Activated naive CD8-positive, alpha-beta T cell treated with anti-CD3 and anti-CD28 coated beads, Interleukin-2, amount 10 ng/mL, durations not matched to agents 7 days and 5 days (primary cell): ENCODE measurements at regions of chr10 and their contacts with region 1.

Region 1: DNA sequence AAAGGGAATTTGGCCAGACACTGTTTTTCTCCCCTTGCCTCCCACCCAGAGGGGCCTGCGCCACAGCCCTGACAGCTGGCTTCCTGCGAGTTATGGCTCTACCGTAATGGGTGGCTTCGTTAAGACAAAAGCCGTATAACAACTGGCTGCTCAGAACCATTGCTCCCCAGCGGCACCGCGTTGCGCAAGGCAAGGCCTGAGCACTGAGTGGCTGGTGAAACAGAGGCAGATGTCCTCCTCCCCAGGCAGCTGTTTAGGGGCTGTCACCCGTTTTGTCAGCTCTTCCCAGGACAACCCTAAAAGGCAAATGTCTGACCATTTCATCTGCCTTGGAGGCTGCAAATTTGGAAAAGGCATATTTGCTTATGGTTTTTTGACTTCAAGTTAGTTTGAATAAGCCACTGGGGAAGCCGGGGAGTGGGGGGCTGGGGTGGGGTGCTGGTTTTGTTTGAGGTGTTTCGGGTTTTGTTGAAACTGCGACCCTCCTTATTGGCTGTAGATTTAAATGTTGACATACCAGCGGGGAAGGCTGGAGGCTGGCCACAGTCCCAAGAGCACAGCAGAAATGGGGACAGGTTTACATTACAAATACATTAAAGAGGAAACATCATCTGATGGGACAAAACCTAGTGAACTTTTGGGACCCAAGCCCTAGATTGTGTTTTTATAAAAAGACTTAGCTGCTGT is 681 bp upstream of the SPOCK2 start:
- DNase-seq: peak; percentile 71
- ATAC-seq: peak; percentile 52
- H3K4me3 Mint-ChIP-seq: peak overlapping the region; percentile 98
- H3K27ac Mint-ChIP-seq: peak overlapping the region; percentile 99
- H3K4me1 Mint-ChIP-seq: peaks cover 46% of the 10 kb centered on the region
- H3K27me3 Mint-ChIP-seq: no peaks in the 10 kb centered on the region

Region 2: GRCh38 chr10:72009411-72010081 is 79.5 kb before region 1 on chr10:
- POLR2A ChIA-PET with region 1: no interaction called
- DNase-seq: no peak
- ATAC-seq: no peak
- H3K4me3 Mint-ChIP-seq: no peak overlapping the region
- H3K27ac Mint-ChIP-seq: no peak overlapping the region
- H3K4me1 Mint-ChIP-seq: no peaks in the 10 kb centered on the region
- H3K27me3 Mint-ChIP-seq: no peaks in the 10 kb centered on the region

Region 3: GRCh38 chr10:72107325-72108003 is 18.4 kb after region 1 on chr10:
- POLR2A ChIA-PET with region 1: interaction called, 67 read pairs
- DNase-seq: no peak
- ATAC-seq: peak; percentile 67
- H3K4me3 Mint-ChIP-seq: peak overlapping the region; percentile 70
- H3K27ac Mint-ChIP-seq: peak overlapping the region; percentile 79
- H3K4me1 Mint-ChIP-seq: peaks cover 62% of the 10 kb centered on the region
- H3K27me3 Mint-ChIP-seq: no peaks in the 10 kb centered on the region

Region 4: DNA sequence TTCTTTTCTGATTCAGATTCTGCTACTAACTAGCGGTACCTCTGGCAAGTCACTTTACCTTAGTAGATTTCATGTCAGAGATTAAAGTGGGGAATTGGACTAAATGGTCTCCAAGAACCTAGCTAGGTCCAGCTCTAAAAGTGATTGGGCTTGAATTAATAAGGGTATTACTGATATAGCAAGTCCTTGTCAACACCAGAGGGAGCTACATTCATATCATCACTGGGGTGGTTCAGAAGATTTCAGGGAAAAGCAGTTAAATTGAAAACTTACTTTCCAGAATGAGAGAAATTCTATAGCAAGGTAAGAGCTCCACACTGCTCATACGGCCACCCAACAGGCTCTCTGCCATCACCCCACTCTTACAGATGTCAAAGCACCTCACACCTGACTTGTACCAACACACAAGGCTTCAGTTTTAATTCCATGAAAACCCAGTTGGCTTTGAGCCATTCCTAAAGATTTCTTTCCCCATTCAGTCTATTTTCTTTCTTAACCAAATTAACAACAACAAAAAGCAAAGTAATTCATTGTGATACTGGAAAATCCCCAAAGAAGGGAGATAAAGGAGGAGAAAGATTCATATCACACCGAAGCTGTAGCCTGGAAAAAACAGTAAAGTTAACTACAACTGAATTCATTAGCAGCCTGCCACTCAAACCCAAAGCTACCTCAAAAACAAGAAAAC is 37.3 kb after region 1 on chr10:
- POLR2A ChIA-PET with region 1: interaction called, 18 read pairs
- DNase-seq: no peak
- ATAC-seq: peak; percentile 26
- H3K4me3 Mint-ChIP-seq: no peak overlapping the region
- H3K27ac Mint-ChIP-seq: no peak overlapping the region
- H3K4me1 Mint-ChIP-seq: peaks cover 27% of the 10 kb centered on the region
- H3K27me3 Mint-ChIP-seq: no peaks in the 10 kb centered on the region

Region 5: DNA sequence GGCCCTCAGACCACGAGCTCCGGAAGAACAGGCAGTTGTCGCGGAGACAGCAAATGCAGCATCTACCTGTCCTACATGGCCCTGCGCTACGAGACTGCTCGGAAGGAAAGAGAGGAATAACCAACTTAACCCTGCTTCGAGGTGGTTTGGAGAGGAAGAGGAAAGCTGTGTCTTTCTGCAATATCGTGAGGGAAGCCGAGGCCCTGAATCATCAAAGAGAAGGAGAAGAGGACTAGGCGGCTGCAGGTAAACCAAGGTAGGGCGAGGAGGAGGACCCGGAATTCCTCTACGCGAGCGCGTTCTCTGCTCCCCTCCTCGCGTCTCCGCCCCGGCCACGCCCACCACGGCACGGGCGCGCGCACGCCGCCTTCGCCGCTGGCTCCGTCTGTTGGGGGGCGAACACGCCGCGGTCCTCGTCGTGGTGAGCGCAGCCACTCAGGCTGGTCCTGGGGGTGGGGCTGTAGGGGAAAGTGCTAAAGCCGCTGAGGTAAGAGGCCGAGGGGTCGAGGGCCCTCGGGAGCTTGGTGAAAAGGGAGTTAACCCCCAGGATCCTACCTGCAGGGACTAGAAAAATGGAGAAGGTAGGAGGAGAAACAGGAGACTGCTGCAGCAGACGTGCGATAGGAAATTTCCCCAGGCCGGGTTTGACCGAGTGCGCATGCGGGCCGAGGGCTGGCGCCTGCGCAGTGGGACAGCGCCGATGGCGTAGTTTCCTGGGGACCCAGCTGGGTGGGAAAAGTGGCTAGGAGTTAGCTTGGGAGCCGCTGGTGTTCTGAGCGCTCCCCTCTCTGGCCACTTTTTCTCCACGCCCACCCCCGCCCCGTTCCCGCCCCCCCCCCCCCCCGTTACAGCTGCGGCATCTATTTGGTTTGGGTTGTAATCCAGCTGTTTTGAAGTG is 126.9 kb after region 1 on chr10 and contains the starts of genes ANAPC16 and ASCC1:
- POLR2A ChIA-PET with region 1: interaction called, 31 read pairs
- DNase-seq: peak; percentile 99
- ATAC-seq: peak; percentile 87
- H3K4me3 Mint-ChIP-seq: peak within 1 kb of the TSS; percentile 93
- H3K27ac Mint-ChIP-seq: peak within 1 kb of the TSS; percentile 93
- H3K4me1 Mint-ChIP-seq: peaks cover 40% of the 10 kb centered on the region
- H3K27me3 Mint-ChIP-seq: no peaks in the 10 kb centered on the region
- total RNA-seq, gene ANAPC16: 89.2 to 89.8 TPM
- total RNA-seq, gene ASCC1: 28.5 to 34.4 TPM

Region 6: GRCh38 chr10:72223743-72224101 is 134.7 kb after region 1 on chr10:
- POLR2A ChIA-PET with region 1: interaction called, 12 read pairs
- DNase-seq: no peak
- ATAC-seq: peak; percentile 18
- H3K4me3 Mint-ChIP-seq: peak overlapping the region; percentile 60
- H3K27ac Mint-ChIP-seq: peak overlapping the region; percentile 84
- H3K4me1 Mint-ChIP-seq: peaks cover 41% of the 10 kb centered on the region
- H3K27me3 Mint-ChIP-seq: no peaks in the 10 kb centered on the region

Region 7: DNA sequence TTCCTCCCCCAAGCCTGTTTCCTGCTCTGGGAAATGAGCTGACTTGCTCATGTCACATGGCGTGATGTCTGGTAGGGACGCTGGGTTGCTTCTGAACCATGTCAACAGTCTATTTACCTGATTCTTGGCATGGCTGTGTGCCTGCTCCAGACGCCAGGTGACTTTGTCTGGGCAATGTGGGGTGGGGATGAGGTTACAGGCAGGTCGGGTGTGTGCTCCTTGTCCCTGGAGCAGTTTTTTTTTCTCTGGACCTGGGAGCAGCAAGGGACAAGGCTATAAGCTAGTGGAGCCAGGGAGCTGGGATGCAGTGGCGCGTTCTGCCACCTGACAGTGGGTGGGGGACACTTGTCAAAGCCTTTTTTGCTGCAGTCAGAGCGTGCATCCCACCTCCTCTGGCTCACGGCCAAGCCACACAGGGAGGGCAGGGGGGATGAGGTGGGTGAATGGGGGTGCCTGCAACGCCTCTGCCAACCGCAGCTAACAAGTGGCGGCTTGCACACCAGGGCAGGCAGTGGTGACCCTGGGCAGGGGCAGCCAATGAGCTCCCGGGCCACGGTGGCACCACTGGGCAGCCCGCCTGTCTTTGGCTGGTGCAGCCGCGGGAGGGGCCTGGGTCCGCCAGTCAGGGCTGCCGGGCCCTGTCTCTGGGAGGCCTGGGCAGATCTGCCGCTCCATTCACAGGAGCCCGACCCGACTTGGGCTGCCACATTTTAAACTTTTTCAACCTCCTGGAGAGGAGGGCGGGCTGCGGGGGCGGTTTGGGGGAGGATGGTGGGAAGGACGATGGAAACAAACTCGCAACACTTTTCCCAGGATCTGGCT is 242.8 kb after region 1 on chr10:
- POLR2A ChIA-PET with region 1: interaction called, 61 read pairs
- DNase-seq: peak; percentile 89
- ATAC-seq: peak; percentile 61
- H3K4me3 Mint-ChIP-seq: peak overlapping the region; percentile 91
- H3K27ac Mint-ChIP-seq: peak overlapping the region; percentile 100
- H3K4me1 Mint-ChIP-seq: peaks cover 73% of the 10 kb centered on the region
- H3K27me3 Mint-ChIP-seq: no peaks in the 10 kb centered on the region